ENCODE measurements at regions of chr9 and their contacts with region 1.

Region 1: GRCh38 chr9:2234371-2234893 is 219.3 kb downstream of the SMARCA2 start:
- DNase-seq: no peak
- ATAC-seq: peak; percentile 76

Region 2: GRCh38 chr9:2321523-2322151 is 87.2 kb after region 1 on chr9:
- intact Hi-C with region 1: no loop called
- DNase-seq: no peak
- ATAC-seq: peak; percentile 37

Region 3: DNA sequence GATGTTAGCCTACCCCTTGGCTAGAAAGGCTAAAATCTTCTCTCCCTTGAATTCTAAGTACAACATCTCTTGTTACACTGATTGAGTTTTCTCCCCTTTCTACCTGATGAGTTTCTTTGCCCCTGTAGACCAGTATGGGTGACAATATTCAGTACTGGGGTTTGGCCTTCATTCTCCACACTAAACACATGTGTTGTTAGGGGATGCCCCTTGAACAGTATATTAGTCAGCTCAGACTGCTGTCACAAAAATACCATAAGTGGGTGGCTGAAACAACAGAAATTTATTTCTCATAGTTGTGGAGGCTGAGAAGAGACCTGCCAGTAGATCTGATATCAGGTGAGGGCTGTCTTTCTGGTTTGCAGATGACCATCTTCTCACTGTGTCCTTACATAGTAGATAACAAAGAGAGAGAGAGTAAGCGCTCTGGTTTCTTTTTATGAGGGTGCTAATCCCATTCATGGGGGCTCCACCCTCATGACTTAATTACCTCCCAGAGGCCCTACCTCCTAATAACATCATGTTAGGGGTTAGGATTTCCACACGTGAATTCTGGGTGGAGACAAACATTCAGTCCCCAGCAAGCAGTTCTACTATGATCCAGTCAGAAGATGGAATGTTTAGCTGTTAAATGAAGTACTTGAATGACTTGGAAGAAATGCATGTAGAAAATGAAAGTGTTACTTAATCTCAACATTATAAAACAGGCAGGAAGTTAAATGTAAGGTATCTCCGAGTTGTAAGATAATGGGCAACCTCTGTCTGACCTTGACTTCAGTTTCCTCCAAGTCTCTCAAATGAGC is 404.6 kb after region 1 on chr9:
- intact Hi-C with region 1: no loop called
- DNase-seq: no peak
- ATAC-seq: no peak

Region 4: DNA sequence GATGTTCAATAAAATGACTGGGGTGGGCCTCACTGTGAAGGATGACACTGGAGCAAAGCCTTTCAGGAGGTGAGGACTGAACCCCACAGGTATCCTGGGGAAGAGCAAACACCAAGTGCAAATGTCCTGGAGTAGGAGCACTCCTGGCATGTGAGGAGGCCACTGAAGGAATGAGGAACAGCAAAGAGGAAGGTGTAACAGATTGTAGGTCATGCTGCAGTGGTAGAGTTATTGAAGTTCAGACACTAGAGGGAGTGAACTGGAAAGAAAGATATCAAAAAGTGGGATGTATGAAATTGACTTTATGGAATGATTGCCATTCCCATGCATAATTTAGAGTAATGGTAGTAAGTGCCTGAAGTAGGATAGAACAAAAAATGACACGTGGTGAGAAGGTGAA is 504.6 kb after region 1 on chr9:
- intact Hi-C with region 1: loop called (anchors 10 kb)
- DNase-seq: no peak
- ATAC-seq: no peak

Measured in Right ventricle myocardium inferior (tissue), 1 donor.